PC-9 (cell line): ENCODE measurements at regions of chr16 and their contacts with region 1.

Region 1: GRCh38 chr16:31472709-31473203 is 804 bp downstream of the TGFB1I1 start:
- DNase-seq: peak; percentile 62 to 95
- H3K4me3 ChIP-seq: peak overlapping the region; percentile 60; the same call in 1 of the 2 replicates
- H3K27ac ChIP-seq: no peak overlapping the region
- H3K4me1 ChIP-seq: peaks cover 13% of the 10 kb centered on the region; the same call in 1 of the 2 replicates
- H3K27me3 ChIP-seq: no peaks in the 10 kb centered on the region
- CTCF ChIP-seq: peak; percentile 71

Region 2: DNA sequence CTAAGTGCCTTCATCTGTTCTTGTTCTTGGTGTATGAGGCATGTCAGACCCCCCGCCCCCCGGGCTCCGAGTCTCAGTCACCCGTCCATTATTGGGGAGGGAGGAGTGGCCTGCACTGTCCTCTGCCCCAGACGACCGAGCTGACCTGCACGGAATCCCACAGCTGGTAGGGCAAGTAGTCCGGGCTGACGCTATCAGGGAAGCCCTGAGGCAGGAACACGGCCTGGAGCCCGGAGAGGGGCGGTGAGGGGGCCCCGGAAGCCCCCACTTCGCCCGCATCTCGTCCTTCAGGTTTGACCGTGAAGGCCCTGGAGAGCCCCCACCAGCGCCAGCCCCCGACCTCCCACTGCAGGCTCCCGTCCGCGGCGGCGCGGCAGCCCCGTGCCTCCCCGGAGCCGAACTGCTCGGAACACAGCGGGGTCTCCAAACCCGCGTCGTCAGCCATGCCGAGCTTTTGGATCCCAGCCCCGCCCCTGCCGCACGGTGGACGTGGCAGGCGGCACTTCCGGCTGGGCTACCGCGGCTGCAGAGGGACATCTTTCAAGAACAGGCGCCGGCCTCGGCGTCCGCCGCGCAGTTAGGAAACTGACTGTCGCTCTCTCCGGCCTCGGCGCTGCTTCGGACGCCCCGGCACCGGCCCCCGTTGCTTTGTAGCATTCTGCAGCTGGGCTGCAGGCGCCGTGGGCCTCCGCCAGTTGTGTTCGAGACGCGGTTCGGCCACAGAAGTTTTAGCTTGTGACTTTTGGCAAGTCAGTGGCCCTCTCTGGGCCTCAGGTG is 35.4 kb after region 1 on chr16 and contains the start of gene RUSF1:
- CTCF ChIA-PET with region 1: no interaction called
- POLR2A ChIA-PET with region 1: interaction called, 3 read pairs
- intact Hi-C with region 1: loop called (anchors 1 kb)
- DNase-seq: peak; percentile 79 to 91
- H3K4me3 ChIP-seq: peak within 1 kb of the TSS; percentile 69
- H3K27ac ChIP-seq: peak within 1 kb of the TSS; percentile 69
- H3K4me1 ChIP-seq: peaks cover 22% of the 10 kb centered on the region
- H3K27me3 ChIP-seq: no peaks in the 10 kb centered on the region; the same call in 1 of the 2 replicates
- CTCF ChIP-seq: no peak
- total RNA-seq, gene RUSF1: 86.7 and 94.7 TPM in 2 replicates

Region 3: GRCh38 chr16:31572821-31573220 is 100.1 kb after region 1 on chr16:
- CTCF ChIA-PET with region 1: no interaction called
- POLR2A ChIA-PET with region 1: no interaction called
- intact Hi-C with region 1: no loop called
- DNase-seq: no peak
- H3K4me3 ChIP-seq: no peak overlapping the region
- H3K27ac ChIP-seq: no peak overlapping the region
- H3K4me1 ChIP-seq: no peaks in the 10 kb centered on the region
- H3K27me3 ChIP-seq: peaks cover 7% of the 10 kb centered on the region; the same call in 1 of the 2 replicates
- CTCF ChIP-seq: no peak

Region 4: DNA sequence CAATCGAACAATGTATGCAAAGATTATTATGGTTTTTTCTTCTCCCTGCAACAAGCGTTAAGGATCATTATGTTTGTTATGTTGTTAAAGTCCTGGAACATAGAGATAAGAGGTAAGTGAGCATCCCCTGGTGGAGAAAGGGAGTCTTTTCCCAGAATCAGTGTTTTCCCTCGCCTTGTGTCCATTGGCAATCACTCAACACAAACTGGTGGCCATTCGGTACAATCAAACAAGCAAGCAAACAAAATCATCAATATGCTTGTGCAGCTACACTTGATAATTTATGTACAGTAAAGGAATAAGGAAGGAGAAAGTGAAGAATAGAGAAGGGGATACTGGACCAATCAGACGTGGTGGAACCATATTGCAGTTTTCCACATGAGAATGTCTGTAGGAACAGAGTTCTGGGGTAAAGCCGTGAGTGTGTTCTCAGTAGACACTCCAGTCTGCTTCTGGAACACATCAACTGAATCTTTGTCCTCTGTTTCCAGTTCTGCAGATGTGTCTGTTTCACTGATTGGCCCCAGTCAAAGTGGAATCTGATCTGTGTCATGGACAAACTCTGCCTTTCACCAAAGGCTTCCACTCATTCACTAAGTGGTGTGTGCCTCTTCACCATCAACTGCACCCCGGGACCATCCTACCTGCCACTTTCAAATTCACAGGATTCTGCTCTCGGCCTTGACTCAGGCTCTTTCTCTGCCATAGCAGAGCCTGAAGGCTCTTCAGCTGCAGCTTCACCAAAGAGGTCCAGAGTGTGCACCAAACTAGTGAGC is 224.4 kb after region 1 on chr16:
- CTCF ChIA-PET with region 1: interaction called, 5 read pairs
- POLR2A ChIA-PET with region 1: interaction called, 4 read pairs
- intact Hi-C with region 1: loop called (anchors 5 kb)
- DNase-seq: no peak
- H3K4me3 ChIP-seq: no peak overlapping the region
- H3K27ac ChIP-seq: no peak overlapping the region
- H3K4me1 ChIP-seq: peaks cover 10% of the 10 kb centered on the region
- H3K27me3 ChIP-seq: no peaks in the 10 kb centered on the region
- CTCF ChIP-seq: peak; percentile 78

Region 5: DNA sequence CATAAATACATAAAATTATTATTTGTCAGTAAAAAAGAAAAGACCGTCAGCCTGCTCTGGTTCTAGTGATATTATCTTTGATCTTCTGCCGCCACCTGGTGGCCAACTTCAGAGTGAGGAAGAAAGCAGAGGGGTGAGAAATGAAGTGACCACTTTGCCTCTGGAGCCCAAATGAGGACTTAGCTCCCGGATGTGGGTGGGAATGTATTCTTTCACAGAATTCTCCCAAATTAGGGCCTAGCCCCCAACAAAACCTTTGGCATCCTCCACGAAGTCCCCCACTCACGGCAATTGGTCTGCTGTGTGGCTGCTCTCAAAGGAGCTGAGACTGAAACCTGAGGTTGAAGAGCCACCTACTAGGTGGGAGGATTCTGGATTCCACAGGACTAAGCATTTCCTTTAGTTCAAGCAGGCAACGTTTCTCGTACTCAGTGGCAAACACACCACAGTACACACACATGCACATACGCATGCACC is 396.0 kb after region 1 on chr16:
- CTCF ChIA-PET with region 1: no interaction called
- POLR2A ChIA-PET with region 1: no interaction called
- intact Hi-C with region 1: loop called (anchors 5 kb)
- DNase-seq: peak; percentile 54 to 78
- H3K4me3 ChIP-seq: no peak overlapping the region
- H3K27ac ChIP-seq: no peak overlapping the region
- H3K4me1 ChIP-seq: no peaks in the 10 kb centered on the region
- H3K27me3 ChIP-seq: peaks cover 13% of the 10 kb centered on the region
- CTCF ChIP-seq: peak; percentile 94